Activated naive CD4-positive, alpha-beta T cell treated with anti-CD3 and anti-CD28 coated beads, Interleukin-2, amount 10 ng/mL, durations not matched to agents 7 days and 5 days (primary cell): ENCODE measurements at regions of chr5 and their contacts with region 1.

Region 1: DNA sequence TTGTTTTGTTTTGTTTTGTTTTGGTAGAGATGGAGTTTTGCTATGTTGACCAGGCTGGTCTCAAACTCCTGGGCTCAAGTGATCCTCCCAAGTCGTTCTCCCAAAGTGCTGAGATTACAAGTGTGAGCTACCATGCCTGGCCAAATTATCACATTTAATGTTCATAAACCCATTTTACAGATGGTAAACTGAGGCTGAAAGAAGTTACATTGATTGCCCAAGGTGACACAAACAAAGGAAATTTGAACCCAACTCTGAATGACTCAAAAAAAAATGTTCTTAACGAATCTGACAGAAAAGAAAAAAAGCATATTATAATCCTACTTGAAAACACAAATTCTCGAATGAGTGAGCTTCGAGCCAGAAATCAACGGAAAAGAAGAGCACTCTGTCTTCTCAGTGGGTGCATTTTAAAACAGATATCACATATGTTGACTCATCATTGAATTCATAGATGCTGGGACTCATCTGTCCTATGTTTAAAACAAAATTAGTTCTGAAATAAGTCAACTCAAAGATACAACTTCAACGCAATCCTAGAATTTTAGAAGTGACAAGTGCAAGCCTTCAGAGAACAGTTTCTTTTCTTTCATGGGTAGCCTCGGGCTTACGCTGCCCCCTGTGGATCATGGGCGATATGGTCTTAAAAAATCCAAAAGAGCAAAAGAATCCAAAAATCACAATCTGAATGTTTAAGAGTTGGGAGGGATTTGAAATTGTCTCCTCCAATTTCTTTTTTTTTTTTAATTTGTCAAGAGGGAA is 28.4 kb downstream of the TIMD4 start:
- DNase-seq: peak; percentile 78
- H3K4me3 Mint-ChIP-seq: no peak overlapping the region
- H3K27ac Mint-ChIP-seq: peak overlapping the region; percentile 69
- H3K4me1 Mint-ChIP-seq: peaks cover 76% of the 10 kb centered on the region
- H3K27me3 Mint-ChIP-seq: no peaks in the 10 kb centered on the region

Region 2: GRCh38 chr5:156835905-156836304 is 98.7 kb before region 1 on chr5:
- CTCF ChIA-PET with region 1: interaction called, 16 read pairs
- DNase-seq: no peak
- H3K4me3 Mint-ChIP-seq: no peak overlapping the region
- H3K27ac Mint-ChIP-seq: no peak overlapping the region
- H3K4me1 Mint-ChIP-seq: peaks cover 7% of the 10 kb centered on the region
- H3K27me3 Mint-ChIP-seq: no peaks in the 10 kb centered on the region

Region 3: GRCh38 chr5:156893517-156893916 is 41.1 kb before region 1 on chr5:
- CTCF ChIA-PET with region 1: interaction called, 16 read pairs
- DNase-seq: no peak
- H3K4me3 Mint-ChIP-seq: no peak overlapping the region
- H3K27ac Mint-ChIP-seq: peak overlapping the region; percentile 92
- H3K4me1 Mint-ChIP-seq: peaks cover 52% of the 10 kb centered on the region
- H3K27me3 Mint-ChIP-seq: no peaks in the 10 kb centered on the region

Region 4: GRCh38 chr5:156949424-156949823 is 14.8 kb after region 1 on chr5:
- CTCF ChIA-PET with region 1: no interaction called
- DNase-seq: no peak
- H3K4me3 Mint-ChIP-seq: no peak overlapping the region
- H3K27ac Mint-ChIP-seq: no peak overlapping the region
- H3K4me1 Mint-ChIP-seq: peaks cover 22% of the 10 kb centered on the region
- H3K27me3 Mint-ChIP-seq: peaks cover 4% of the 10 kb centered on the region